BJ (cell line): ENCODE measurements at regions of chr5 and their contacts with region 1.

Region 1: DNA sequence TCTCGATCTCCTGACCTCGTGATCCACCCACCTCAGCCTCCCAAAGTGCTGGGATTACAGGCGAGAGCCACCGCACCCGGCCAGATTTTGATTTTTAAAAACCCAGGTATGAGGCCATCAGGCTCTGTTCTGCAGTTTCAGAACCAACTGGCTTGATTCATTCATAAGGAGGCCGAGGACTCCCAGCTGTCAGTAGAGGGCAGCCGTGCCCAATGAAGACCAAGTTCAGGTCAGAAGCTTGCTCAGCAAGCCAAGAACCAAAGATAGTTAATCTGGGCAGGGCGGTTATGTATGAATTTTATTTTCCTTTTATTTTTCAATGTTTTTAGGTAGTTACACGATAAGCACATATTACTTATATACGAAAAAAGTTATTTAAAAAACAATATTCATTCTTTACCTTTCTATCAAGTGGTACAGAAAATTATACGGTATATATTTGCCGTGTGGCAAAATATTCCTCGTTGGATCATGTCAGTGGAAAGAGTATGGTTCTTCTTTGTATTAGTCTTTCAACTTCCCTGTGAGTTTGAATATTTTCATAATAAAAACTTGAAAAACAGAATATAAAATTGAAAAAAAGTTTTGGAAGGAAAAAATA is 18.0 kb downstream of the MGAT1 start:
- DNase-seq: no peak
- H3K4me3 ChIP-seq: no peak overlapping the region
- H3K27me3 ChIP-seq: no peaks in the 10 kb centered on the region
- CTCF ChIP-seq: peak; percentile 87

Region 2: DNA sequence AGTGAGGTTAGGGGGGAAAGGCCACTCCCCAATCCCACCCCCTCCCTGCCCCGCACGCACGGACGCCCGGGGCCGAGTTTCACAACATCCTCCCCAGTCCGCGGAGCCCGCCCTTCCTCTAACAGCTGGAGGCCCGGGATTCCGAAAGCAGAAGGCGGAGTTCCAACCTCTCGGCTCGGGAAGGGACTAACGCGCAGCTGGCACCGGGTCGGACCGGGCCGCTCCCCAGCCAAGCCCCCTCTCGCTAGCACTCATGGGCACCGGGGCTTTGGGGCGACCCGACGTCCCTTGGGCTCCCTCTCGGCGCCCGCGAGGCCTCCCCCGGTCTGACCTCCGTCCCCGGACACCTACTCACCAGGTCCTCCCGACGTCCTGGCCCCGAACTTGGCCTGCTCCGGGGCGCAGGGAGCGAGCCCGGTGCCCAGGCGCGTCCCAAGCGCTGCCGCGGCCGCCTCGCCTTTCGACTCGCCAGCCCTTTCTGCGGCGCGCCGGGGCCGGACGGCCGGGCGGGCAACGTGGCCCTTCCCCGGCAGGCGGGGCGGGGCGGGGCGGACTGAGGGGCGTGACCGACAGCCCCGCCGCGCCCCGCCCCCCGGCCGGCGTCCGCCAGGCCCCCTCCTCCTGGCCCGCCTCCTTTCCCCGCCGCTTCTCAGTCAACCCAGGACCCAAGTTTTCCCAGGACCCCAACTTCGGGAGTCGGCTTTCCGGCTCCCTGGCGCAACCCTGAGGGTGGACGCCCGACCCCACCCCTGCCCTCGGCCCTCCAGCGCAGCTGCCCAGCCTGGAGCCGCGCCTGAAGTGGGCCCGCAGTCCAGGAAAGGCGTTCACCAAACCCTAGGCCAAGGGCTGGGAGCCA is 18.0 kb after region 1 on chr5 and contains the start of gene MGAT1:
- CTCF ChIA-PET with region 1: interaction called, 38 read pairs
- POLR2A ChIA-PET with region 1: interaction called, 15 read pairs
- DNase-seq: no peak
- H3K4me3 ChIP-seq: peak within 1 kb of the TSS; percentile 95
- H3K27me3 ChIP-seq: no peaks in the 10 kb centered on the region
- CTCF ChIP-seq: no peak
- polyA plus RNA-seq, gene MGAT1: 156 and 197 TPM in 2 replicates

Region 3: DNA sequence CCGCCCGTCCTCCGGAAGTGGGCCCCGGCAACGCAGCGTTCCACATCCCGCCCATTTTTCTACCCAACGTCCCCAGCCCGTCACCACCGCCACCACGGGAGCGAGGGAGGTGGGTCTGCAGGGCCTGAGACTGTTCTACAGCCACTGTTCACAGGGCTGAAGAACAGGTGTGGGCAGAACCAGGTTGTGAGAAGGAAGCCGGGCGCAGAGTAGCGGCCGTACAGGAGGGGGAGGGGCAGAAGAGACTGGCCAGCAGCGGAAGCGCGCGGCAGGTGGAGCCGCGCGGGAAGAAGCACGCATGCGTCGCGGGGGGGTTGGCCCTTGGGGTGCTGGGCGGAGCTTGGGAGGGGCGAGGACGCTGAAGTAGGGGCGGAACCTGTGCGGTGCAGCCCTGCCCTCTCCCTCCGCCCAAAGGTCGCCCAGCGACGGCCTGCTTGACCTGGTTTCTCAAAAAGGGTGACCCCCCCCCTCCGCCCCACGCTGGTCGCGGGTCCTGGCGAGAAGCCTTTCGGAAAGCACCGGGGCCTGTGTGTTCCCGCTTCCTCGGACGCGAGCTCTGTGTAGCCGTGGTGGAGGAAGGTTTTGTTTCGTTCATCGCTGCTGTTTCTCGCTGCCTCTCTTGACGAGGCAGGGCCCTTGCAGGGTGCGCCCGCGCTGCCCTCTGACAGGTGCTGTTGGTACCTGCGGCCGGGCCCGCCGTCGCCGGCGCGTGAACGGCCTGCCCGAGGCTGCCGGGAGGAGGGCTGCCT is 25.8 kb after region 1 on chr5:
- CTCF ChIA-PET with region 1: interaction called, 15 read pairs
- POLR2A ChIA-PET with region 1: interaction called, 9 read pairs
- DNase-seq: peak; percentile 65
- H3K4me3 ChIP-seq: peak overlapping the region; percentile 69
- H3K27me3 ChIP-seq: no peaks in the 10 kb centered on the region
- CTCF ChIP-seq: no peak

Region 4: DNA sequence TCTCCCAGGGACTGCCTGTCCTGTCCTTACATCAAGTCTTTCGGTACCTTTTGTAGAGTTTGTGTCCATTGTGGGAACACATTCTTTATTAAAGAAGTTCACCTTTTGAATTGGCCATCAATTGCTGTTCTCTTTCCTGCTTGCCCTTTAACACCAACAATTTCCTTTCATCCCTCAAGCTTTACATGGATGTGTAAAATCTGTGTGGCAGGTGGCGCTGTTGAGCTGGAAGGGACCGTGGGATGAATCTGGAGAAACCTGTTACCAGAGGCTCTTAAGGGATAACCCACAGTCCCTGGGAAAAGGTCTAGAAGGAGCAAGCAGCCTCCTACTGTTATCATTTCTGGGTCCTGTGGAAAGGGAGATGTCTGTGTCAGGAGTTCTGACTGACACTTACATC is 84.4 kb after region 1 on chr5:
- CTCF ChIA-PET with region 1: interaction called, 26 read pairs
- POLR2A ChIA-PET with region 1: no interaction called
- DNase-seq: no peak
- H3K4me3 ChIP-seq: no peak overlapping the region
- H3K27me3 ChIP-seq: peaks cover 2% of the 10 kb centered on the region; the same call in 1 of the 2 replicates
- CTCF ChIP-seq: peak; percentile 93